ENCODE measurements at regions of chr19 and their contacts with region 1.

Region 1: GRCh38 chr19:29702161-29702962 is 12.7 kb downstream of the C19orf12 start:
- DNase-seq: no peak
- H3K4me3 ChIP-seq: no peak overlapping the region
- H3K27ac ChIP-seq: no peak overlapping the region
- H3K4me1 ChIP-seq: no peaks in the 10 kb centered on the region
- H3K27me3 ChIP-seq: no peaks in the 10 kb centered on the region
- CTCF ChIP-seq: no peak

Region 2: DNA sequence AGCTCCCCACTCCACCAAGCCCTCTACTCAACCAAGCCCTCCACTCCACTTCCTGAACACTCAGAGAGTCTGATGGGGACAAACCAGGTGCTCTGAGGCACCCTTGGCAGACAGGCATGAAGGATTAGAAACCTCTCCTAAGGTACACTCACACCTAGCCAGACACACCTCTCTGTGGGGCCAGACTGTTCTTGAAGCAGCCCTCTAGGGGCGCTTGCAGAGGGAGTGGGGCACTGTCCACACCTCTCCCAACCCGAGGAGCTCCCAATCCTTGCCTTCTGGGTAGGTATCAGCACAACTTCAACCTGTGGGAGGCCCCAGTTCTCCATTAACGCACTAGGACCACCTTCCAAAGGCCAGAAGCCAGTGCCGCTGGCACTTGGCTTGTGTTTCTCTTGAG is 285.3 kb before region 1 on chr19:
- CTCF ChIA-PET with region 1: no interaction called
- POLR2A ChIA-PET with region 1: interaction called, 18 read pairs
- intact Hi-C with region 1: no loop called
- DNase-seq: no peak
- H3K4me3 ChIP-seq: no peak overlapping the region
- H3K27ac ChIP-seq: no peak overlapping the region
- H3K4me1 ChIP-seq: no peaks in the 10 kb centered on the region
- H3K27me3 ChIP-seq: peaks cover 75% of the 10 kb centered on the region
- CTCF ChIP-seq: no peak